Endothelial cell of umbilical vein (primary cell): ENCODE measurements at regions of chr18 and their contacts with region 1.

Region 1: GRCh38 chr18:70431203-70431624 is 142.4 kb downstream of the SOCS6 start:
- DNase-seq: no peak
- H3K4me3 ChIP-seq: no peak overlapping the region
- H3K27ac ChIP-seq: no peak overlapping the region
- H3K4me1 ChIP-seq: no peaks in the 10 kb centered on the region
- H3K27me3 ChIP-seq: no peaks in the 10 kb centered on the region
- CTCF ChIP-seq: no peak
- POLR2A ChIP-seq: no peak

Region 2: DNA sequence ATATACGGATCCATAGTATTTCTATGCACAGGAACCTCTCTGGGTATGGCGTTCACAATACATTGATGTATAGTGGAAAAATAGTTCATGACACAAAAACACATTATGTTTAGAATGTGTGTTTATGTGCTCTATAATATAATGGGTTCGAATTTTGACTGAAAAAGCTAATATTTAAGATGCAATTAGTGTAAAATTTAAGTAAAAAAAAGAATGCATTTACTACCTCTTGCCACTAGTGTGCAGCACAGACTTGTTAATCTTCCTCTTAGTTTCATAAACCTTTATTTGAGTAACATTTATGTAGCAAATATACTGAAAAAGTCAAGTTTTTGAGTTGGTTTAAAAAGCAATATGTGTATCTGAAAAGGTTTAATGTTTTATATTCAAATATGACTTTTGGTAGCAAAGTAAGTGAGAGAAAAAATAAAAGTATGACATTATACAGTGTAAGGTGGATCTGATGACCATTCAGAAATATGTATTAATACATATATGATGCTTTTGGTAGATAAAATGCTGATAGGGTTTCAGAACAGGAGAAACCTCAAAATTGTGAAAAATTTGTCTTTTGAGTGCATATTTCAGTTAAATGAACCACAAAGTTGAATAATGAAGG is 1583.9 kb before region 1 on chr18:
- CTCF ChIA-PET with region 1: interaction called, 10 read pairs
- POLR2A ChIA-PET with region 1: no interaction called
- dilution Hi-C with region 1: no loop called
- intact Hi-C with region 1: no loop called
- DNase-seq: peak; percentile 64
- H3K4me3 ChIP-seq: no peak overlapping the region
- H3K27ac ChIP-seq: no peak overlapping the region
- H3K4me1 ChIP-seq: no peaks in the 10 kb centered on the region
- H3K27me3 ChIP-seq: no peaks in the 10 kb centered on the region
- CTCF ChIP-seq: peak; percentile 33 to 45
- POLR2A ChIP-seq: no peak

Region 3: GRCh38 chr18:70172225-70172624 is 259.0 kb before region 1 on chr18:
- CTCF ChIA-PET with region 1: interaction called, 38 read pairs
- POLR2A ChIA-PET with region 1: no interaction called
- dilution Hi-C with region 1: no loop called
- intact Hi-C with region 1: loop called (anchors 1 kb)
- DNase-seq: peak; percentile 27
- H3K4me3 ChIP-seq: no peak overlapping the region
- H3K27ac ChIP-seq: no peak overlapping the region
- H3K4me1 ChIP-seq: no peaks in the 10 kb centered on the region
- H3K27me3 ChIP-seq: no peaks in the 10 kb centered on the region
- CTCF ChIP-seq: peak; percentile 16 to 19
- POLR2A ChIP-seq: no peak

Region 4: GRCh38 chr18:70188113-70188512 is 243.1 kb before region 1 on chr18:
- CTCF ChIA-PET with region 1: interaction called, 22 read pairs
- POLR2A ChIA-PET with region 1: no interaction called
- dilution Hi-C with region 1: no loop called
- intact Hi-C with region 1: no loop called
- DNase-seq: no peak
- H3K4me3 ChIP-seq: no peak overlapping the region
- H3K27ac ChIP-seq: no peak overlapping the region
- H3K4me1 ChIP-seq: peaks cover 4% of the 10 kb centered on the region
- H3K27me3 ChIP-seq: no peaks in the 10 kb centered on the region
- CTCF ChIP-seq: no peak
- POLR2A ChIP-seq: no peak

Region 5: DNA sequence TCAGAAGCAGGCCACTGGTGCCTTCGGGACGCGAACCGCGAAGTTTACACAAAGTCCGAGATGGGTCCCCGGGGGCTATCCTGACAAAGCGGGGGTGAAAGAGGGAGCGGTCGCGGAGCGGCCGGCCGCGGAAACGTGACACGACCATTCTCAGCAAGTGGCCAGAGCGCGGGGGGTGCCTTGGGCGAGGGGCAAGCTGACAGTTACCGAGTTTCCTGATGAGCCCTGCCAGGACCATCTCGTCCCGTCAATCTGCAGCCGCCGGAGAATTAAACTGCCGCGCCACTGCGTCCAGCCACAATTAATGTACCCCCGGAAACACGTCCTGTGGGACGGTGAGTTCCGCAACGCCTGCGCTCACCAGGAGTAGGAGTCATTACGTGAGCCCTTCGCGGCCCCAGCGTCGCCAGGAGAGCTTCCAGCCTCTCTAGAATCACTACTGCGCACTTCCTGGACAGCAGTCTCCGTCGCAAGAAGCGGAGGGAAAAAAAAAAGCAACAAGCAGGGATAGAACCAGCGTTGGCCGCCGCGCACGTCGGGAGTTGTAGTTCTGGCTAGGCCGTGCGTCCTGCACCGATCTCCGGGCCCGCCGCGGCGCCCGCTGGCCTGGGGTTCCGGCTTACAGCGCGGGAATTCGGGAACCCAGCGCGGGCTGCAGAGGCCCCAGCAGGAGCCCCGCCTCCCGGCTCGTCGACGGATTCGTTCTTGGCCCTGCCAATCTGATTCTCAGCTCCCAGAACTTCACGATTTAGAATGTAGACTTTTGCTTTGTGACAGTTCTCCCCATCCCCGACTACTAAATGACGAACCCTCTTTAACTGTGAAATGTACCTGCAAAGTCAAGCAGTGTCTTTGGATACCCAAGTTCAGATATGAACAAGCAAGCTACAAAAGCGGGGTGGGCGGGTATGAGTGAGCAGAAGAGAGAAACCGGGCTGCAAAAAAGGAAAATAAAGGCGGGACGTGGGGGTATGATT is 225.5 kb before region 1 on chr18 and contains the start of gene RTTN:
- CTCF ChIA-PET with region 1: interaction called, 304 read pairs
- POLR2A ChIA-PET with region 1: no interaction called
- dilution Hi-C with region 1: no loop called
- intact Hi-C with region 1: loop called (anchors 1 kb)
- DNase-seq: peak; percentile 96
- H3K4me3 ChIP-seq: peak within 1 kb of the TSS; percentile 89 to 96 (median 95)
- H3K27ac ChIP-seq: peak within 1 kb of the TSS; percentile 87
- H3K4me1 ChIP-seq: peaks cover 8% of the 10 kb centered on the region
- H3K27me3 ChIP-seq: peaks cover 0 to 9% of the 10 kb centered on the region in 2 experiments
- CTCF ChIP-seq: no peak
- POLR2A ChIP-seq: no peak
- total RNA-seq, gene RTTN: 16.7 and 17.4 TPM in 2 replicates

Region 6: GRCh38 chr18:70448588-70448987 is 17.4 kb after region 1 on chr18:
- CTCF ChIA-PET with region 1: interaction called, 12 read pairs
- POLR2A ChIA-PET with region 1: no interaction called
- dilution Hi-C with region 1: no loop called
- intact Hi-C with region 1: no loop called
- DNase-seq: no peak
- H3K4me3 ChIP-seq: no peak overlapping the region
- H3K27ac ChIP-seq: no peak overlapping the region
- H3K4me1 ChIP-seq: no peaks in the 10 kb centered on the region
- H3K27me3 ChIP-seq: no peaks in the 10 kb centered on the region
- CTCF ChIP-seq: no peak
- POLR2A ChIP-seq: no peak